Lower leg skin (tissue), 4 donors: ENCODE measurements at regions of chr3 and their contacts with region 1.

Region 1: DNA sequence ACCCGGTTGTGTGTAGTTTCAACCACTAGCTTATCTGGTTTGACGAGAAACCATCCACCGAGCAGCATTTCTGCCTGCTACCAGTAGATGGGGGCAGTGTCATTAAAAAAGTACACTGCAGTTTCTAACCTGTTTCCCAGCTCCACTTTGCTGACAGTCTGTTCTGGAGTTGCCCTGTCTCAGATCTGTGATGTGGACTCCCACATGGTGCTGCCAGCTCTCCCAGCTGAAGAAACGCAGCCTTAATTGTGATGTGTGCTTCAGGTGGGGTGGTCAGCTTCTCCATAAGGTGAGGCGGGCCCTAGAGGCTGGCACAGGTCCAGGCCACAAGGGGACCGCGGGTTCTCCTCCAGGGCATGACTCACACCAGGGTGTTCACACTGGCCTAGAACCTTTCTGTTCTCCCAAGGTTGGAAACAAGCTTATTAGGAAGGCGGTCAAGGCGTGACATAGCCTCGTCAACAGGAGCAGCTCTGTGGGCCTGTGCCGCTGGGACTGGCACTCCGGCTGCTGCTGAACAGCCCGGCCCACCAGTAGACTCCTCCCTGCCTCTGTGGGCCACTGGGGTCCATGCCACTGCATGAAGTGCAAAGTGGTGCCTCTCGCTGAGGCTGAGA is 2.9 kb upstream of the FAM43A start:
- DNase-seq: peak; percentile 77 to 94
- H3K4me3 ChIP-seq: no peak overlapping the region
- CTCF ChIP-seq: peak in 1 of 3 donors; percentile 92
- POLR2A ChIP-seq: no peak

Region 2: GRCh38 chr3:194967151-194968117 is 284.6 kb after region 1 on chr3:
- intact Hi-C with region 1: no loop called
- DNase-seq: peak in 1 of 2 donors; percentile 50
- H3K4me3 ChIP-seq: no peak overlapping the region
- CTCF ChIP-seq: no peak
- POLR2A ChIP-seq: no peak

Region 3: DNA sequence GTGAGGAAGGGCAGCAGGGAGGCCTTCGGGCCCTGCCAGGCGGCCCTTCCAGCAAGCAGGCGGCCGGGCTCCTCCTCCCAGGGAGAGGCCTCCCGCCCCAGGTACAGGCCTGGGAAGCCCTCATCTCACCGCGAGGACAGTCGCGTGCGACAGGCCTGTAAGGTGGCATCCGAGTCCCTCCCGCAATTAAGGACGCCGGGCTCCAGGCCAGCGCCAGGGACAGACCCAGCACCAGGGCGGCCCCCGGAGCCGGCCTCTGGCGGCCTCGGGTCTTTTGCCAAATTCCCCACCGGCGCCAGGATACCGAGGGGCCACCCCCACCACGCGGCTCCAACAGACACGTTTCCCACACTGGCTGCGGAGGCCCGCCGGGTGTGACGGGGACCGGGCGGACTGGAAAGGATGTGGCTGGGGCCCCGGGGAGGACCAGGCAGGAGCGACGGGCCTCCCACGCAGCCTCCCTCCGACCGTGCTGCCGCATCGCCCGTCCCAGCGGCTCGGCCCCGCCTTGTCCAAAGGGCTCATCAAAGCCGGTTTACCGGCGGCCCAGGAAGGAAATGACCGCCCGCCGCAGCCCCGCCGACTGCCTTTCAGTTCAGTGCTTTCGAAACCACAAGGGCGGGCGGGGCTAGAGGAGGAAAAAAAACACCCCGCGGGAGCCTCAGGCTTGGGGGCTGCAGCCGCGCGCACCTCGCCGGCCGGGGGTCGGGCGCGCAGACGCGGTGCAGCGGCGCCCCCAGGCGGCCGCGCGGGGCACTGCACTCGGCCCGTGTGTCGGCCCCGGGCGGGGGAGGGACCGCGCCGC is 576.9 kb after region 1 on chr3:
- intact Hi-C with region 1: loop called (anchors 5 kb)
- DNase-seq: peak; percentile 89 to 98
- H3K4me3 ChIP-seq: peak overlapping the region; percentile 16
- CTCF ChIP-seq: no peak
- POLR2A ChIP-seq: no peak